ENCODE measurements at regions of chr11 and their contacts with region 1.

Region 1: DNA sequence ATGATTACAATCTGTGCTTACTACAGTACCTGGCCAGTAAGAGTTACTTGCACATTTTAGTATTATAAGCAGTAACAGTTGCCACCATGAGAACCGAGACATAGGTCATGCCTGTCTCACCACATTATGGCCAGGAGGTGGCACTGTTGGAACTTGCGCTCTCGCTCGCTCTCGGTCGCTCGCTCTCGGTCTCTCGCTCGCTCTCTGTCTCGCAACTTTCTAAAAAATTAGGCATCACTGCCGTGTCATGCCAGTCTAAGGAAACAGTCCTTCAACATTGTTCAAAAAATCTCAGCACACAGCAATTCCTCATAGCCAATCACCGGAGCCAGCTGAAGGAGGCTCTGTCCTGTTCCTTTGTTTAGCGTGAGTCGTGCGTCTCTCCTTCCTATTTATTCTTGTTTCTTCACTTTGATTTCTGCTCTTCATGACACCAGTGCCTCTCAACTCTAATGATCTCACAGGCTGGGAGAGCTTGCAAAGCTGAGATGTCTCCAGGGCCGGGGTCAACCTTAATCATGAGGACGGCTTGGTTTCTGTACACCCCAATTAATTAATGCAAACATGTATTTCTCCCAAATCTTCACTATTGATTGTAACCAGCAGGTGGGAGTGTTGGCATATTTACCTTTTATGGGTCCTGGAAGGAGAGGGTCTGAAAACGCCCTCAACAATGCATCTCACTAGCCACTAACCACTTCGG is 6.3 kb upstream of the ADAMTS8 start:
- DNase-seq: peak; percentile 90
- H3K4me3 ChIP-seq: peak overlapping the region; percentile 41 to 62 (median 53)
- H3K27ac ChIP-seq: peak overlapping the region; percentile 77 to 86 (median 80)
- H3K4me1 ChIP-seq: peaks cover 0 to 19% (median 14%) of the 10 kb centered on the region in 4 donors
- H3K27me3 ChIP-seq: no peaks in the 10 kb centered on the region
- CTCF ChIP-seq: peak; percentile 70 to 87 (median 82)
- EP300 ChIP-seq: no peak
- POLR2A ChIP-seq: no peak

Region 2: DNA sequence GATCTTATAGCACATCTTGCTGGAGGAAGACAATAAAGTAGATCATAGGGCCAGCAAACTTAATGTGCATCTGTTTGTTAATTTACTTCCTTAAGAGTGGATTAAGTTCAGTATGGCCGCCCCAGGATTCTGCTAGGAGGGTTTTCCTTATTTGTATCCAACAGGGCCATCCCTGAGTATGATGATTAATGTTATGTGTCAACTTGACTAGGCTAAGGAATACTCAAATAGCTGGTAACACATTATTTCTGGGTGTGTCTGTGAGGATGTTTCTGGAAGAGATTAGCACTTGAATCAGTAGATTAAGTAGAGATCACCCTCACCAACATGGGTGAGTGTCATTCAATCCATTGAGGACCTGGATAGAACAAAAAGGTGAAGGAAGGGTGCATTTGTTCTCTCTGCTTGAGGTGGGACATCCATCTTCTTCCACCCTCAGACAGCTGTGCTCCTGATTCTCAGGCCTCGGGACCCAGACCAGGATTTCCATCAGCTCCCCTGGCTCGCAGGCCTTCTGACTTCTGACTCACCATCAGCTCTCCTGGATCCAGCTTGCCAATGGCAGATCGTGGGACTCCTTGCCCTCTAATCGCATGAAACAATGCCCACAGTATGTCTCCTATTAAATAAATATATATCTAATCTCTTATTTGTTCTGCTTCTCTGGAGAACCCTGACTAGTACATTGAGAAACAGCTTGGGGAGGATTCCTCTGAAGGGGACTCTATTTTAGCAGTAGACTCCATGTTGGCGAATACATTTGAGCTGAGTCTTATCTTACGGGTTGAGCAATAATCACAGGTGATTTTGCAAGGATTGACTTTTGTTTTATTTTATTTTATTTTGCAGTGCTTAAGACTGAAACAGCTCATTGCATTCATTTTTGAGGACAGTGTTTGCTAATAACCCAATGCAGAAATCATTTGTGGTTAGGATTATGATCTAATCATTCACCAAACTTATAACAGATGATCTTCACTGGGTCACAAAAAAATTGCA is 110.9 kb before region 1 on chr11:
- intact Hi-C with region 1: no loop called
- DNase-seq: no peak
- H3K4me3 ChIP-seq: no peak overlapping the region
- H3K27ac ChIP-seq: no peak overlapping the region
- H3K4me1 ChIP-seq: no peaks in the 10 kb centered on the region
- H3K27me3 ChIP-seq: no peaks in the 10 kb centered on the region
- CTCF ChIP-seq: no peak
- EP300 ChIP-seq: no peak
- POLR2A ChIP-seq: no peak

Region 3: GRCh38 chr11:130522284-130522961 is 87.8 kb after region 1 on chr11:
- intact Hi-C with region 1: loop called (anchors 5 kb)
- DNase-seq: peak; percentile 98
- H3K4me3 ChIP-seq: no peak overlapping the region
- H3K27ac ChIP-seq: peak overlapping the region; percentile 71 to 81 (median 76)
- H3K4me1 ChIP-seq: peaks cover 2 to 30% (median 25%) of the 10 kb centered on the region in 4 donors
- H3K27me3 ChIP-seq: no peaks in the 10 kb centered on the region
- CTCF ChIP-seq: no peak
- EP300 ChIP-seq: peak in 2 of 4 donors; percentile 88 to 93
- POLR2A ChIP-seq: no peak

Region 4: GRCh38 chr11:130623670-130624668 is 189.3 kb after region 1 on chr11:
- intact Hi-C with region 1: loop called (anchors 2 kb)
- DNase-seq: no peak
- H3K4me3 ChIP-seq: no peak overlapping the region
- H3K27ac ChIP-seq: peak overlapping the region; percentile 60 to 84 (median 74)
- H3K4me1 ChIP-seq: peaks cover 0 to 51% (median 46%) of the 10 kb centered on the region in 4 donors
- H3K27me3 ChIP-seq: no peaks in the 10 kb centered on the region
- CTCF ChIP-seq: peak in 3 of 4 experiments; percentile 27 to 44 (median 36)
- EP300 ChIP-seq: peak in 2 of 4 donors; percentile 54 to 70
- POLR2A ChIP-seq: no peak

Region 5: DNA sequence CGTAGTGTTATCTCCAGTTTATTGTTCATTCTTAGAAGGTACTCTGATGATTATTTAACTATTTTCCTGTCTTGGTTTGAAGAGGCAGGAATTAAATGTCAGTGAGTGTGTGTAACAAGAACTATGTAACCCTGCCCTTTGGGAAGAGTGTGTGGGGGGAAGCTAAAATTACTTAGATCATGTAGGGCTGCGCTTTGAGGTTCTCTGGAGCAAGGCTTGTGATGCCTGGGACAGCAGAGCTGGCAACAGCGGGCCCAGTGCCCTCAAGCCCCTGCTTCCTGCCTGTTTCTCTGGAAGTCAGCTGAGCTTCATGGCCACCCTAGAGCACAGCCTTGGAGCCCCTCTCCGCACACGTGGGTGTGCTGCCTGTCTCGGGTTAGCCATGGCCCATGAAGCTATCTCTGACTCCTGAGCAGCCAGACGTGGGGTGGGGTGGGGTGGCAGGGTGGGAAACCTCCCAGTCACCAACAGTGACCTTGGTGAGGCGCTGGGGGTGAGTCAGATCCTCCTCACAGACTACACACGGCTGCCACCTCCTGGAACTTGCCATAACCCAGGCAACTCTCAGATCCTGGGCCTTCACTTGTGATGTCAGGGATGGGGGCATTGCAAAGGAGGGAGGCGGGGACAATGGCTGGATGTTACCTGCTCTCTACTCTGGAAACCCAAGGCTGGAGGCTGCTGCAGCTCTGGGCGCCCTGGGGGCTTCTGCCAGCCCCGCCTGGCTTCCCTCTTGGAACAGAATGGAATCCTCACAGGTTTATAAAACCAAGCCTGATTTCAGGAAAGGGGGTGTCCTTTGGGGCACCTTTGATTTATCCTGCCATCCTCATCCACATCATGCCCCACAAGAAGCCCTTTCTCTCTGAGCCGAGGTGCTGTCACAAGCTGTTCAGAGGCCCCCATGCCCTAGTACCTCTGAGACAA is 393.0 kb after region 1 on chr11:
- intact Hi-C with region 1: loop called (anchors 1 kb)
- DNase-seq: peak; percentile 80
- H3K4me3 ChIP-seq: no peak overlapping the region
- H3K27ac ChIP-seq: peak overlapping the region; percentile 47 to 71 (median 65)
- H3K4me1 ChIP-seq: peaks cover 0 to 57% (median 50%) of the 10 kb centered on the region in 4 donors
- H3K27me3 ChIP-seq: no peaks in the 10 kb centered on the region
- CTCF ChIP-seq: peak; percentile 16 to 53 (median 30)
- EP300 ChIP-seq: no peak
- POLR2A ChIP-seq: no peak

Region 6: GRCh38 chr11:130861902-130862860 is 427.5 kb after region 1 on chr11:
- intact Hi-C with region 1: loop called (anchors 1 kb)
- DNase-seq: peak; percentile 95
- H3K4me3 ChIP-seq: peak overlapping the region in 1 of 4 donors; percentile 5
- H3K27ac ChIP-seq: peak overlapping the region in 1 of 4 donors; percentile 11
- H3K4me1 ChIP-seq: peaks cover 0 to 29% (median 11%) of the 10 kb centered on the region in 4 donors
- H3K27me3 ChIP-seq: no peaks in the 10 kb centered on the region
- CTCF ChIP-seq: peak; percentile 100
- EP300 ChIP-seq: no peak
- POLR2A ChIP-seq: no peak

Region 7: DNA sequence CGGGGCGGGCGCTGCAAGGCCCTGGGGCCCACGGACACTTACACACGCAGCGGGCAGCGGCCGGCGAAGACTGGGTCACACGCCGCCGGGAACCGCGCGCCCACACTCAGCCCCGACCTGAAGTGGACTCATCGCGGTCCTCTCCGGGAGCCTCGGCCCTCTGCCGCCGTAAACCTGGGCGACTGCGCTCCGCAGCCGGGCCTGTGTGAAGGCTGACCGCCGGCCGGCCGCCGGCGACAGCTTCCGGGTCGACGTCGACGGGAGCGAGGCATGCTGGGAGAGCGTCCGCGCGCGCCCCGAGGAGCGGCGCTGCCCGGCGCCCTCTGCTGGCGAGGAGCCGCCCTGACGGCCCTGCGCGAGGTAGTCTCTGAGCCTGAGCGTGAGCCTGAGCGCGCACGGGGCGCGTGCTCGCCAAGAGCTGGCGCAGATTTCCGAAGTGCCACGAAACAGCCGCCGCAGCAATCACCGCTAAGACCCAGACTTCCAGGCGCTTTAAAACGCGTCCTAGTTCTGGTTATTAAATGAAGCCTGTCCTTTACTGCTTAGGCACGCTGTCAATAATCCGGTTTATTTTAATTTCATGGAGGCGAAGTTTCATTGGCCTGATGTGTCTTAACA is 481.7 kb after region 1 on chr11 and contains the start of gene SNX19:
- intact Hi-C with region 1: loop called (anchors 1 kb)
- DNase-seq: peak; percentile 96
- H3K4me3 ChIP-seq: peak within 1 kb of the TSS; percentile 68 to 95 (median 80)
- H3K27ac ChIP-seq: peak within 1 kb of the TSS; percentile 89 to 94 (median 91)
- H3K4me1 ChIP-seq: peaks cover 0 to 48% (median 32%) of the 10 kb centered on the region in 4 donors
- H3K27me3 ChIP-seq: no peaks in the 10 kb centered on the region
- CTCF ChIP-seq: peak; percentile 66 to 89 (median 83)
- EP300 ChIP-seq: no peak
- POLR2A ChIP-seq: peak; percentile 81 to 88
- total RNA-seq, gene SNX19: 72.1 to 124 (median 85.9) TPM

Measured in sigmoid colon (tissue), 7 donors.